ENCODE measurements at regions of chr3 and their contacts with region 1.

Region 1: DNA sequence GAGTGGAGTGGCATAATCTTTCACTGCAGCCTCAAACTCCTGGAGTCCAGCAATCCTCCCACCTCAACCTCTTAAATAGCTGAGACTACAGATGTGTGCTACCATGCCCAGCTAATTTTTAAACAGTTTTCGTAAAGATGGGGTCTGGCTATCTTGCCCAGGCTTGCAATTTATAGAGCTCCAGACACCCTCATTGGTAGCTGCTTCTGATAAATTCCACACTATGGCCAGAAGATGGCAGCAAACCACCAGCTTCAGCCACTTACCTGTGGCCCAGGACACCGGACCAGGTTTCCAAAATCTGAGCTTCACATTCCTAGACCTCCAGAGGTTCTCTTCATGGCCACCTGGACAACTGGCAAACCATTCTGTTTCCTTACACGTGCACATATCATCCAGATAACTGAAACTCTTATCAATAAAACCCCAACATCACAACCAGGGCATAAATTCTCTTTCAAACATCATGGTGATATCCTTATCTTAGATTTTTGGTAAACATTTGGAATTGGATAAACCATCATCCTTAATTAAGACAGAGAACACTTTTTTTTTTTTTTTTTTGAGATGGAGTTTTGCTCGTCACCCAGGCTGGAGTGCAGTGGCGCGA is 28.9 kb downstream of the FBXW12 start:
- DNase-seq: peak in 1 of 2 donors; percentile 52
- ATAC-seq: peak; percentile 73

Region 2: DNA sequence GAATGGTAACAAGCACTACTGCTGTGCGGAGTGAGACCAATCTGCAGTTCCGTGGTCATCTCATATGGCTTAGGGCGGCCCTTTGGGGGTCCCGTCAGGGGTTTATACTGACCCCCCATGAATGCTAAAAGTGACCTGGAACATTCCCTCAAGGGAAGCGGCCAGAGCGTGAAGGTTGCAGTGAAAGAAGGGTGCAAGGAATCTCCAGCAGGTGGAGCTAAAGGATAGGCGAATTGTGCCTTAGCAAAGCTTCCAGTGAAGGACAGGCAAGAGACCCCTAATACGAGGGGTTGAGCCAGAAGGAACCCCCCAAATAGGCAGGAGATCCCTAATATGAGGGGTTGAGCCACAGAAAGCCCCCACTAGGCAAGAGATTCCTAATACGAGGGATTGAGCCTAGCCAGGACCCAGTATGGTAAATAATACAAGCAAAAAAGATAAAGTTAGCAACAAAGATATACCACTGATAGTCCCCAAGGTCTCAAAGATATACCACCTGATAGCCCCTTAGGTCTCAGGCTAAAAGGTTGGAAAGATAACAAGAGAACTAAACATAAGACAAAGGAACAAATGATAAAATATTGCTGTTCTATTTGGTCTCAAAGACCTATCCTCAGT is 127.2 kb before region 1 on chr3:
- intact Hi-C with region 1: loop called in 1 of 2 experiments (anchors 10 kb)
- DNase-seq: peak; percentile 40 to 51
- ATAC-seq: peak; percentile 39

Region 3: DNA sequence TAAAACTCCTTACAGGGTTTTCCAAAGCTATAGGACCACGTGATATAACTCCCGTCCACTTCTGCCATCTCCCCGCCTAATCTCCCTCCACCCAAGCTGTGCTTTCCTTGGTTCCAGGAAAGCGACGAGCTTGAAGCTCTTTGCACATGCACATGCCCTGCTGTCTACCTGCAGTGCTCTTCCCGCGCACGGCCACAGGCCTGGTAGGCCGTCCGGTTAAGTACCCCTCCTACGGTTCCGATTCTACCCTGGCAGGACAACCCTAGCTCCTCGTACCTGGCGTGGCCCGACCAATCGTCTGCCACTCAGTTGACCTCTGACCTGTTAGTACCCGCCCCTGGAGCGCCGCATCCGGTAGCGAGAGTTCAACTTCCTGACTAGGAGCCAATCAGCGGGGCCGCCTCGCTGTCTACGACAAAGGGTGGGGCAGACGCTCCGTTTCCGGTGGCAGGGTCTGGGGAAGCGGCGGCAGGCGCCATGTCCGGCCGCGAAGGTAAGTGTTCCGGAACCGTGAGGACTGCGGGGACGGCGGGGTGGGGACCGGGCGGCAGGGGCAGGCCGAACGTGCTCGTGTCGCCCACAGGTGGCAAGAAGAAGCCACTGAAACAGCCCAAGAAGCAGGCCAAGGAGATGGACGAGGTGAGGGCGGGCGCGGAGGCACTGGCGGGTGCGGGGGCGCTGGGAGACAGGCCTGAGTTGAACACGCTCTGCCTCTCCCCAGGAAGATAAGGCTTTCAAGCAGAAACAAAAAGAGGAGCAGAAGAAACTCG is 39.1 kb after region 1 on chr3 and contains the starts of genes CCDC51 and TMA7:
- intact Hi-C with region 1: loop called in 1 of 2 experiments (anchors 5 kb)
- DNase-seq: peak; percentile 99
- ATAC-seq: peak; percentile 93
- total RNA-seq, gene CCDC51: 13.3 to 21.2 TPM
- total RNA-seq, gene TMA7: 165 to 192 TPM

Region 4: DNA sequence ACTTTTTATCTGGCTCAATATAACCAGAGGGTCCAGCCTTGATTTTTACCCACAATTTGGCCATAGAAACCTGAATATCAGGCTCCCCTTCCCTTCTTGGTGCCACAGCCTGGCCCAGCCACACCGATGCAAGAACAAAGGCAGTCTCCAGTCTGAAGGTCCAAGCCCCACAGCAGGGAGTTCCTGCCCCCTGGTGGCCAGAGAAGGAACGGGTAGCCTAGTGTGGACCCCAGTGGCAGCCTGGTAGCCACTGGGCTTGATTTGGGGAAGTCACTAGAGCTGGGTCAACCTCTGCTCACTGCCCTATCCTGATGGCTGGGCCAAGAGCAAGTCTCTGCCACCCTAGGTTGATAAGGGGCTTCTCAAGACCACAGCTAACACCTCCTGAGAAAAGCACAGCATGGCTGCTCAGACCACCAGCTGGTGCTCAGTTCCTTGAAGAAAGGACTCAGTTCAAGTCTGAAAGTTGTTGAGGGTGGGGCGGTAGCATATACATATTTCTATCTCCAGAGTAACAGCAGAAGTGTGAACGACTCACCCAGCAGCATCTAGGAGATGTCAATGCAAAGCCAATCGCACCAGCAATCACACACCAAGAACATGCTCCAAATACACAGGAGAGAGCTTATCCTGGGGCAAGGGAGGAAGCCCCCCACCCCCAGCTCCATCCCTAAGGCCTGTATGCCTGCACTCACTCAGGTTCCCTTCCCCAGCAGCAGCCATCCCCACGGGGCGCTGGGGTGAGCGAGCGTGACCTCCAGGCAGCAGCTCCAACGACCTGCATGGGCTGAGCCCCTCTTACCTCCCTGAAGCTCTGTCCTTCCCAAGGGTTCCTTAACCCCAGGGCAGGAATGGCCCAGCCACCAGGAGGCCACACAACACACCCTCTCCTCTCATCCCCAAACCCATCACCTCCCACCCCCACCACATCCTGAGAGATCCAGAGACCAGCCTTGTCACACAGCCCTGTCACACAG is 148.1 kb after region 1 on chr3:
- intact Hi-C with region 1: loop called in 1 of 2 experiments (anchors 5 kb)
- DNase-seq: peak; percentile 69 to 90
- ATAC-seq: peak; percentile 84